ENCODE measurements at regions of chr5 and their contacts with region 1.

Region 1: GRCh38 chr5:138809391-138809790 is 56.2 kb downstream of the CTNNA1 start:
- DNase-seq: no peak
- H3K4me3 ChIP-seq: no peak overlapping the region
- H3K4me3 Mint-ChIP-seq: no peak overlapping the region
- H3K27ac Mint-ChIP-seq: no peak overlapping the region
- H3K4me1 ChIP-seq: peaks cover 29% of the 10 kb centered on the region
- H3K4me1 Mint-ChIP-seq: peaks cover 18% of the 10 kb centered on the region
- H3K27me3 ChIP-seq: no peaks in the 10 kb centered on the region
- H3K27me3 Mint-ChIP-seq: no peaks in the 10 kb centered on the region
- CTCF ChIP-seq: no peak

Region 2: GRCh38 chr5:138792195-138792790 is 17.1 kb before region 1 on chr5:
- CTCF ChIA-PET with region 1: interaction called, 6 read pairs
- POLR2A ChIA-PET with region 1: no interaction called
- intact Hi-C with region 1: loop called (anchors 1 kb)
- DNase-seq: no peak
- H3K4me3 ChIP-seq: no peak overlapping the region
- H3K4me3 Mint-ChIP-seq: no peak overlapping the region
- H3K27ac Mint-ChIP-seq: peak overlapping the region; percentile 11
- H3K4me1 ChIP-seq: peaks cover 25% of the 10 kb centered on the region
- H3K4me1 Mint-ChIP-seq: peaks cover 34% of the 10 kb centered on the region
- H3K27me3 ChIP-seq: no peaks in the 10 kb centered on the region
- H3K27me3 Mint-ChIP-seq: no peaks in the 10 kb centered on the region
- CTCF ChIP-seq: no peak

Region 3: GRCh38 chr5:138832218-138832617 is 22.8 kb after region 1 on chr5:
- CTCF ChIA-PET with region 1: no interaction called
- POLR2A ChIA-PET with region 1: no interaction called
- intact Hi-C with region 1: no loop called
- DNase-seq: no peak
- H3K4me3 ChIP-seq: no peak overlapping the region
- H3K4me3 Mint-ChIP-seq: no peak overlapping the region
- H3K27ac Mint-ChIP-seq: no peak overlapping the region
- H3K4me1 ChIP-seq: no peaks in the 10 kb centered on the region
- H3K4me1 Mint-ChIP-seq: peaks cover 20% of the 10 kb centered on the region
- H3K27me3 ChIP-seq: no peaks in the 10 kb centered on the region
- H3K27me3 Mint-ChIP-seq: no peaks in the 10 kb centered on the region
- CTCF ChIP-seq: no peak

Measured in Caco-2 (cell line).